ENCODE measurements at regions of chr7 and their contacts with region 1.

Region 1: GRCh38 chr7:19754521-19755116 is 18.8 kb downstream of the TMEM196 start:
- DNase-seq: no peak

Region 2: DNA sequence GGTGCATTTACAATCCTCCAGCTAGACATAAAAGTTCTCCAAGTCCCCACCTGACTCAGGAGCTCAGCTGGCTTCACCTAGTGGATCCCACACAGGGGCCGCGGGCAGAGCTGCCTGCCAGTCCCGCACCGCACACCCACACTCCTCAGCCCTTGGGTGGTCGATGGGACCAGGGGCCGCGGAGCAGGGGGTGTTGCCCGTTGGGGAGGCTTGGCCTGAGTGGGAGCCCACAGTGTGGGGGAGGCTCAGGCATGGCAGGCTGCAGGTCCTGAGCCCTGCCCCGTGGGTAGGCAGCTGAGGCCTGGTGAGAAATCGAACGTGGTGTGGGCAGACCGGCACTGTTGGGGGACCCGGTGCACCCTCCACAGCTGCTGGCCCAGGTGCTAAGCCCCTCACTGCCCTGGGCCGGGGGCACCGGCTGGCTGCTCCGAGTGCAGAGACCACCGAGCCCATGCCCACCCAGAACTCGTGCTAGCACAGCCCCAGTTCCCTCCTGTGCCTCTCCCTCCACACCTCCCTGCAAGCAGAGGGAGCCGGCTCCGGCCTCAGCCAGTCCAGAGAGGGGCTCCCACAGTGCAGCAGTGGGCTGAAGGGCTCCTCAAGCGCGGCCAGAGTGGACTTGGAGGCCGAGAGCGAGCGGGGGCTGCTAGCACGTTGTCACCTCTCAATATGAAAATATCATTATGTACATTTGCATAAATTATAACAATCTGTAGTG is 62.3 kb before region 1 on chr7:
- intact Hi-C with region 1: no loop called
- DNase-seq: no peak

Region 3: DNA sequence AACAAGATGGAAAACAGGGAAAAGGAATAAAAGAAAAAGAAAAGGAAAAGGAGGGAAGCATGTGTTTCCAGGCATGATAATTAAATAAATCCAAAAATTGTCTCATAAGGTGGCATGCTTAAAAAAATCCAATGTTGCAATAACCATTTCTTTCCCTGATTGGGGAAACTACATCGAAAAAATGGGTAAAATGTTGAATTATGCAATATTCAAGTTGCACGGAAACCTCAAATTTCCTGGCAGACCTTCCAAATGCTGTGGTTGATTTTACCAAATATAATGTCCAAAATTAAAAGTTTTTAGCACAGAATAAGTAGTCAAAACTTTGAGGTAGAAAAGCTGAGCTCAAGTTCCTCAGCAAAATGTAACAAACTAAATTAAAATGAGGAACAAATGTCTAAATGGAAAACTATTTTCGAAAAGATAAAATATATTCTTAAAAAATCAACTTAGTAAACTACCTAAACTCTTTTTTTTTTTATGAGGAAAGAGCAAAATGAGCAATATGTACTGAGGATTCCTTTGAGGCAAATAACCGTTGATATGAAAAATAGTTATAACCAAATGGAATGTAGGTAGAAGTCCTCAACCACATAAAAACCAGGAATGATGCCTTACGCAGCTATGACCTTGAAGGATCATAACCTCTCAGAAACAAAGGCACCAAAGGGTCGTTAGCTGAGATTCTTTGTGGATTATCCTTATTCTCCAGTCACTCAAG is 410.0 kb after region 1 on chr7:
- intact Hi-C with region 1: loop called in 1 of 2 experiments (anchors 10 kb)
- DNase-seq: no peak

Region 4: DNA sequence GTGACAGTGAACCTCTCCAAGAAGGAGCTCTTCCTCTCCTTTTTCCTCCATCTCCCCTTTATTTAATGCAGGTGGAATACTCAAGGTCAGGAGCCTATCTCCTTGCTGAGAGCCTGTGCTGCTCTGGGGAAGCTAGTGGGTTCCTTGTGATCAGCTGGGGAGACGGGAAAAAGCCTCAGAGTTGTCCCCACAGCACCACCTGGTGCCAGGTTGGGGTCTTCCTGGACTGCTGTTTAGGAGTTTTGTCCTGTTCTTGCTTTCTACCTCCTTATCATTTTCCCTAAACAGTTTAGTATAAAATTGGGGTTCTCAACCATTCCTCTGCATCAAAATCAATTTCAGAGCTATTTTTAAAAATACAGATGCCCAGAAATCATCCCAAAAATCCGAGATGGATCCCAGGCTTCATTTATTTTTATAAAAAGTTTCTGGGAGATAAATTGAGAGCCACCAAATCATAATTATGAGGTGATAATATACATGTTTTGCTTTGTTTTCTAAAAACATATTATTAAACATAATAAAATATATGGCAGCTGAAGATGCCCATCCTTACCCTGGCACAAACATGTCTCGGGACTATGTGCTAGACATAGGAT is 418.2 kb after region 1 on chr7:
- intact Hi-C with region 1: loop called (anchors 10 kb)
- DNase-seq: peak; percentile 84